Psoas muscle (tissue), 8 donors: ENCODE measurements at regions of chr13 and their contacts with region 1.

Region 1: GRCh38 chr13:44350775-44351509 is 22.7 kb upstream of the SERP2 start:
- DNase-seq: no peak
- ATAC-seq: no peak
- H3K4me3 ChIP-seq: no peak overlapping the region
- H3K27ac ChIP-seq: no peak overlapping the region
- H3K4me1 ChIP-seq: no peaks in the 10 kb centered on the region
- H3K27me3 ChIP-seq: no peaks in the 10 kb centered on the region
- CTCF ChIP-seq: no peak

Region 2: DNA sequence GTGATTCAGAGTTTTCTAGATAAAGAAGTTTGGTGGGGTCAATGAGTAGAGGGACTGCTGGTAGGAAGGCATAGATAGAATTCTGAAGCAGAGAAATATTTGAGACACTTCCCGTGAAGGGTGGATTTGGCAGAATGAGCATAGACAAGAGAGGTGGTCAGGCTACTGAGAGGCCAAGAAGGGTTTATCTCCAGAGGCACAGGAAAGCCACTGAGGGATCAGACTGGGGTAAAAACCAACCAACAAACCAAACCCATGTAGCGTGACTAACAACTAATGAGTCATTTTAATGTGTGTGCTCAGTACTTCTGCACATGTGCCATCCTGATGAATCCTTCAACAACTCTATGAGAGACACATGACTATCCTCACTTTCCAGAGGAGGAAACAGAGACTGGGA is 37.3 kb before region 1 on chr13:
- intact Hi-C with region 1: no loop called
- DNase-seq: no peak
- ATAC-seq: no peak
- H3K4me3 ChIP-seq: no peak overlapping the region
- H3K27ac ChIP-seq: no peak overlapping the region
- H3K4me1 ChIP-seq: peaks cover 18% of the 10 kb centered on the region
- H3K27me3 ChIP-seq: no peaks in the 10 kb centered on the region
- CTCF ChIP-seq: no peak

Region 3: GRCh38 chr13:44388427-44389059 is 37.6 kb after region 1 on chr13:
- intact Hi-C with region 1: no loop called
- DNase-seq: no peak
- ATAC-seq: no peak
- H3K4me3 ChIP-seq: no peak overlapping the region
- H3K27ac ChIP-seq: no peak overlapping the region
- H3K4me1 ChIP-seq: no peaks in the 10 kb centered on the region
- H3K27me3 ChIP-seq: no peaks in the 10 kb centered on the region
- CTCF ChIP-seq: no peak

Region 4: GRCh38 chr13:44410346-44410859 is 59.5 kb after region 1 on chr13:
- intact Hi-C with region 1: loop called in 1 of 2 experiments (anchors 5 kb)
- DNase-seq: no peak
- ATAC-seq: no peak
- H3K4me3 ChIP-seq: no peak overlapping the region
- H3K27ac ChIP-seq: no peak overlapping the region
- H3K4me1 ChIP-seq: no peaks in the 10 kb centered on the region
- H3K27me3 ChIP-seq: no peaks in the 10 kb centered on the region
- CTCF ChIP-seq: no peak

Region 5: GRCh38 chr13:44484562-44485138 is 133.7 kb after region 1 on chr13:
- intact Hi-C with region 1: no loop called
- DNase-seq: no peak
- ATAC-seq: no peak
- H3K4me3 ChIP-seq: peak overlapping the region; percentile 11
- H3K27ac ChIP-seq: no peak overlapping the region
- H3K4me1 ChIP-seq: peaks cover 33% of the 10 kb centered on the region
- H3K27me3 ChIP-seq: no peaks in the 10 kb centered on the region
- CTCF ChIP-seq: no peak

Region 6: DNA sequence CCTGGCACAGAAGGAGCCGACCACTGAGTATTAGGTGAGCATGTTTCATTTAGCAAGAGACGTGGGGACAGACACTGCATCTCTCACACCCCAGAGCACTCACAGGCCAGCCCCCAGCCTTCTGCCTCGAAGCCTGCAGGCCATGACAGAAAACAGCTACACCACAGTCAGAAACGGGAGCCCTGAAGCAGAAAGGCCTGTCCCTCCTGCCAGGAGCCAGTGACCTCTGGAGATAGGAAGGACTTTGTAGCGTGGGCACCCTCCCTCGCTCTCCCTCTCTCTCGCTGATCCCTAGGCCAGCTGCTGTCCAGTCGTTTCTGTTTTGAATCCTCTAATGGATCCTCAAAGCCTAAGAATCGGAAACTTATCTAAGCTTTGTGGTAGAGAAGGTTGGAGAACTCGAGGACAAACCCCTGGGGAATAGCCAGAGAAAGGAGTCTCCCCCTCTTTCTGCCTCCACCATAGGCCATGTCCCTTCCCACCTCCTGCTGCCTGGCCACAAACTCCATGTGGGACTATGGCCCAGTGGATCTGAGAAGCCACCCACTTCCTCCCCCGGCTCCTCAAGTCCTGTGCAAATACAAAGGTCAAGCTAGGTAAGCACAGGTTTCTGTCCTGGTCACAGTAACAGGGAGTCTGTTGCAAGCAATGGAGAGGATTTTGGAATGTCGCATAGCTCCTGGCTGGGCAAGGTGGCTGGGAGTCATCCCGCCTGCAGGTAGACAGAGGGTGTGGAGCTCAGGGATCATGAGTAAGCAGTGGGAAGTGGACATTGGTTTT is 543.2 kb after region 1 on chr13:
- intact Hi-C with region 1: no loop called
- DNase-seq: no peak
- ATAC-seq: peak in 3 of 4 donors; percentile 48 to 51 (median 51)
- H3K4me3 ChIP-seq: no peak overlapping the region
- H3K27ac ChIP-seq: no peak overlapping the region
- H3K4me1 ChIP-seq: no peaks in the 10 kb centered on the region
- H3K27me3 ChIP-seq: no peaks in the 10 kb centered on the region
- CTCF ChIP-seq: no peak